ENCODE measurements at regions of chr7 and their contacts with region 1.

Region 1: DNA sequence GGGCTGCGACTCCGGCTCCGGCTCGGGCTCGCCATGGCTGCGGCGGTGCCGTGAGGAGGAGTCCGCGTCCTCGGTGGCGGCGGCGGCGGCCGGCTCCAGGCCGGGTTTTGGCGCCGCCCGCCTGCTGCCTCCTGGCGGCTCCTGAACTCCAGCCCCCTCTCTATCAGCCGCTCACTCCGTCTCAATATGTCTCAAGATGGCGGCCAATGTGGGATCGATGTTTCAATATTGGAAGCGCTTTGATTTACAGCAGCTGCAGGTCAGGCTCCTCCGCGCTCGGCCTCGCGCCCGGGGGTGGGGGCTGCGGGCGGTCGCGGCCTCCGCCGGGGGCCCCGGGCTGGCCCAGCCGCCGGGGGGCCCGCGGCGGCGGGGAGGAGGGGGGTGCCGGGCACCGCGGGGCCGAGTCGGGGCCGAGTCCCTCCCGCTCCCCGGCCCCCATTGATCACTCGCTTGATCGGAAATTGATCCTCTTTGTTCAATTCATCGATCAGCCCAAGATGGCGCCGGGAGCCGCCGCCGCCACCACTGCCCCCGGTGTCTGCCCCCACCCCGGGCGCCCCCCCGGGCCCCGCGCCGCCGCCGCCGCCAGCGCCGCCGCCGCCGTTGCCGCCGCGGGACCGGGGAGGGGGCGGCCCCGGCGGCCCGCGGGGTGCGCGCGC is 1.5 kb upstream of the CUX1 start:
- DNase-seq: peak; percentile 85 to 86
- H3K4me3 ChIP-seq: peak overlapping the region; percentile 99
- H3K4me3 Mint-ChIP-seq: peak overlapping the region; percentile 96
- H3K27ac Mint-ChIP-seq: no peak overlapping the region
- H3K4me1 ChIP-seq: peaks cover 32% of the 10 kb centered on the region
- H3K4me1 Mint-ChIP-seq: peaks cover 25% of the 10 kb centered on the region
- H3K27me3 ChIP-seq: no peaks in the 10 kb centered on the region
- H3K27me3 Mint-ChIP-seq: no peaks in the 10 kb centered on the region
- CTCF ChIP-seq: peak in 1 of 2 experiments; percentile 23

Region 2: GRCh38 chr7:101402088-101402779 is 413.7 kb before region 1 on chr7:
- CTCF ChIA-PET with region 1: no interaction called
- POLR2A ChIA-PET with region 1: no interaction called
- intact Hi-C with region 1: no loop called
- DNase-seq: peak; percentile 57 to 73
- H3K4me3 ChIP-seq: no peak overlapping the region
- H3K4me3 Mint-ChIP-seq: peak overlapping the region; percentile 20
- H3K27ac Mint-ChIP-seq: peak overlapping the region; percentile 37
- H3K4me1 ChIP-seq: peaks cover 13% of the 10 kb centered on the region
- H3K4me1 Mint-ChIP-seq: peaks cover 21% of the 10 kb centered on the region
- H3K27me3 ChIP-seq: no peaks in the 10 kb centered on the region
- H3K27me3 Mint-ChIP-seq: no peaks in the 10 kb centered on the region
- CTCF ChIP-seq: no peak

Region 3: GRCh38 chr7:101602484-101603241 is 213.3 kb before region 1 on chr7:
- CTCF ChIA-PET with region 1: interaction called, 5 read pairs
- POLR2A ChIA-PET with region 1: no interaction called
- intact Hi-C with region 1: loop called (anchors 1 kb)
- DNase-seq: peak; percentile 85 to 90
- H3K4me3 ChIP-seq: no peak overlapping the region
- H3K4me3 Mint-ChIP-seq: no peak overlapping the region
- H3K27ac Mint-ChIP-seq: peak overlapping the region; percentile 86
- H3K4me1 ChIP-seq: peaks cover 35% of the 10 kb centered on the region
- H3K4me1 Mint-ChIP-seq: peaks cover 12% of the 10 kb centered on the region
- H3K27me3 ChIP-seq: no peaks in the 10 kb centered on the region
- H3K27me3 Mint-ChIP-seq: no peaks in the 10 kb centered on the region
- CTCF ChIP-seq: peak; percentile 86 to 94

Region 4: DNA sequence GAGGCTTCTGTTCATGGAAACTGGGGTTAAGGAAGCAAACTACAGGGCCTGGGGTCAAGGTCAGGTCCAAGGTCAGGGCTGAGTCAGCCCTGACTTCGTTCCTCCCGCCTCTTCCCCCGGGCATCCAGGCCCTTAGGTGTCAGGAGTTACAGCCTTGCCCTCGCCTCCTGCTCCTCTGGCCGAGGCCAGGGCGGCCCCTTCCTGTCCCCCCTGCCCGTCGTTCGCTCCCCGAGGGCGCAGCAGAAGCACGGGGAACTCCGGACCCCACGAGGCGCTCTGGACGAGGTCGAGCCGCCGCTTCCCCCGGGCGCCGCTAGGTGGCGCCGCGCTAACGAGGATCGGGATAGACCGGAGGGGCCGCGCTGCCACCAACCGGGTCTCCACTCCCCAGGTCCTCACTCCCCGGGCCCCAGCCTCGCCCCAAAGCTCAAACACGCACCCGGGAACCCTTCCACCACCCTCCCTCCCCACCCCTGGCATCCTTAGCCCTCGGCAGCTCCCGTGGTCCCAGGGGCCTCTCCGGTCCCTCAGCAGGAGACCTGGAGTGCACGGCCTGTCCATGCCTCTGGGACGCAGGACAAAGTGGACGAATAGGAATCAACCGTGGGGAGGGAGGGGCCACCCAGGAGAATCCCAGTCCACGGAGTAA is 127.7 kb before region 1 on chr7:
- CTCF ChIA-PET with region 1: no interaction called
- POLR2A ChIA-PET with region 1: interaction called, 3 read pairs
- intact Hi-C with region 1: loop called (anchors 1 kb)
- DNase-seq: peak; percentile 80 to 91
- H3K4me3 ChIP-seq: peak overlapping the region; percentile 42
- H3K4me3 Mint-ChIP-seq: no peak overlapping the region
- H3K27ac Mint-ChIP-seq: no peak overlapping the region
- H3K4me1 ChIP-seq: peaks cover 19% of the 10 kb centered on the region
- H3K4me1 Mint-ChIP-seq: peaks cover 13% of the 10 kb centered on the region
- H3K27me3 ChIP-seq: no peaks in the 10 kb centered on the region
- H3K27me3 Mint-ChIP-seq: no peaks in the 10 kb centered on the region
- CTCF ChIP-seq: peak; percentile 93 to 94

Region 5: GRCh38 chr7:101743241-101743994 is 72.5 kb before region 1 on chr7:
- CTCF ChIA-PET with region 1: interaction called, 3 read pairs
- POLR2A ChIA-PET with region 1: interaction called, 3 read pairs
- intact Hi-C with region 1: loop called (anchors 2 kb)
- DNase-seq: peak; percentile 66 to 73
- H3K4me3 ChIP-seq: peak overlapping the region; percentile 61
- H3K4me3 Mint-ChIP-seq: peak overlapping the region; percentile 81
- H3K27ac Mint-ChIP-seq: peak overlapping the region; percentile 21
- H3K4me1 ChIP-seq: peaks cover 20% of the 10 kb centered on the region
- H3K4me1 Mint-ChIP-seq: peaks cover 11% of the 10 kb centered on the region
- H3K27me3 ChIP-seq: no peaks in the 10 kb centered on the region
- H3K27me3 Mint-ChIP-seq: no peaks in the 10 kb centered on the region
- CTCF ChIP-seq: peak; percentile 30 to 52

Region 6: DNA sequence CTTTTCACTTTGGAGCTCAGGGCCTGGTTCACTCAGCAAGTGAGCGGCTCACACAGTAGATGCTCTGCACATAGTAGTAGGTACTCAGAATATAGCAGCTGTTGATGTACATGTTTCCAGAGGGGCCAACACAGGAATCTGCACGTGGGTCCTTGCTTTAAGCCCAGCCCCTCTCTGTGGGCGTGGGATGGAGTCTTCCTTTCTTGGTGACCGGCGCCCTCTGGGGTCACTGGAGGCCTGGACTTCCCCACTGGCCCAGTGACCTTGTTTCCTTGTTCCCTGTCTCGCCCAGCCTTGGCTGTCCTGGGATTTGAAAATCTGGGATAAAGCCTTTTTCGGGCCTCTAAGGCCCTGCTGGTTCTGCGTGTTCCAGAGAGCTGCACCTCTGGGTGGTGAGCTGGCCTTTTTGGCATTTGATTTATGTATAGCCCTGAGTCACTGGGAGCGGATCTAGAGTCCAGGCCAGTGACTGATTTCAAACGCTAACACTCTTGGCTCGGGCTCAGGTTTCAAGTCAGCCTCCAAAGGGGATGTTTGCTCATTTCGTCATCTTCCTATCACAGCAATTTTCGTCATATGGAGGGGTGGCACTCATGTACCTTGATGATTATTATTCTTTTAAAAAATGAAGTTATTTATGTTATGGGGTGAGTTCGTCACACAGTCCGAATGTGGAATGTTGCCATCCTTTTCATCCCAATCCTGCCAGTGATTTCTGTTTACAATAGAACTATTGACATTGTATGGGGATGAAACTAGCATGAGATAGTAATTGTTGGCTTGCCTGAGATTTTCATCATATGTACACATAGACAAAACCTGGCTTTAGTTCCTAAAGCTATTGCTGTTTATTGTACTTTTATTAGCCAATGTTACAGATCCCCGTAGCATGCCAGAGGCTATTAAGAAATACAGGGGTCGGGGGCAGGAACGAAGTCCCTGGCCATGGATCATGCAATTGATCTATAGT is 66.9 kb after region 1 on chr7:
- CTCF ChIA-PET with region 1: no interaction called
- POLR2A ChIA-PET with region 1: no interaction called
- intact Hi-C with region 1: loop called (anchors 2 kb)
- DNase-seq: peak; percentile 92
- H3K4me3 ChIP-seq: peak overlapping the region; percentile 13; the same call in 1 of the 2 replicates
- H3K4me3 Mint-ChIP-seq: peak overlapping the region; percentile 66
- H3K27ac Mint-ChIP-seq: peak overlapping the region; percentile 96
- H3K4me1 ChIP-seq: peaks cover 63% of the 10 kb centered on the region
- H3K4me1 Mint-ChIP-seq: peaks cover 62% of the 10 kb centered on the region
- H3K27me3 ChIP-seq: no peaks in the 10 kb centered on the region
- H3K27me3 Mint-ChIP-seq: no peaks in the 10 kb centered on the region
- CTCF ChIP-seq: peak in 1 of 2 experiments; percentile 21

Region 7: DNA sequence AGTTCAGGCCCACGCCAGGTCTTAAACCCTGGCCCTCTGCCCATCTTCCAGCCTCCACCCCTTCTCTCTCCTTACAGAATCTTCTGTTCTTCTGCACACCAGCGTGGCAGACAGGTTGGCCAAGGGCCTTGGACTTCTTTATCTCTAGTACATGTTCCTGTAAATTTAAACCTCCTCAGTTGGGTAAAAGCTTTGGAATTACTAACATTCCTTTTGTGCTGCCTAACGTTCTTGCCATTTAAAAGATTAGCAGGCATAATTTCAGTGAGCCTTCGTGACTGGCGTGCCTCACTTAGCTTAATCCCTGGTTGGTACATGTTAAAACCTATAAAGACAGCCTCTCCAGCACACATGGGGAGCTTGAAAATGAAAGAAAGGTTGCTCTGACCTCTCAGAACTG is 193.7 kb after region 1 on chr7:
- CTCF ChIA-PET with region 1: no interaction called
- POLR2A ChIA-PET with region 1: interaction called, 5 read pairs
- intact Hi-C with region 1: loop called (anchors 5 kb)
- DNase-seq: peak; percentile 29 to 44
- H3K4me3 ChIP-seq: no peak overlapping the region
- H3K4me3 Mint-ChIP-seq: peak overlapping the region; percentile 24
- H3K27ac Mint-ChIP-seq: peak overlapping the region; percentile 86
- H3K4me1 ChIP-seq: peaks cover 87% of the 10 kb centered on the region
- H3K4me1 Mint-ChIP-seq: peaks cover 67% of the 10 kb centered on the region
- H3K27me3 ChIP-seq: no peaks in the 10 kb centered on the region
- H3K27me3 Mint-ChIP-seq: no peaks in the 10 kb centered on the region
- CTCF ChIP-seq: no peak

Region 8: DNA sequence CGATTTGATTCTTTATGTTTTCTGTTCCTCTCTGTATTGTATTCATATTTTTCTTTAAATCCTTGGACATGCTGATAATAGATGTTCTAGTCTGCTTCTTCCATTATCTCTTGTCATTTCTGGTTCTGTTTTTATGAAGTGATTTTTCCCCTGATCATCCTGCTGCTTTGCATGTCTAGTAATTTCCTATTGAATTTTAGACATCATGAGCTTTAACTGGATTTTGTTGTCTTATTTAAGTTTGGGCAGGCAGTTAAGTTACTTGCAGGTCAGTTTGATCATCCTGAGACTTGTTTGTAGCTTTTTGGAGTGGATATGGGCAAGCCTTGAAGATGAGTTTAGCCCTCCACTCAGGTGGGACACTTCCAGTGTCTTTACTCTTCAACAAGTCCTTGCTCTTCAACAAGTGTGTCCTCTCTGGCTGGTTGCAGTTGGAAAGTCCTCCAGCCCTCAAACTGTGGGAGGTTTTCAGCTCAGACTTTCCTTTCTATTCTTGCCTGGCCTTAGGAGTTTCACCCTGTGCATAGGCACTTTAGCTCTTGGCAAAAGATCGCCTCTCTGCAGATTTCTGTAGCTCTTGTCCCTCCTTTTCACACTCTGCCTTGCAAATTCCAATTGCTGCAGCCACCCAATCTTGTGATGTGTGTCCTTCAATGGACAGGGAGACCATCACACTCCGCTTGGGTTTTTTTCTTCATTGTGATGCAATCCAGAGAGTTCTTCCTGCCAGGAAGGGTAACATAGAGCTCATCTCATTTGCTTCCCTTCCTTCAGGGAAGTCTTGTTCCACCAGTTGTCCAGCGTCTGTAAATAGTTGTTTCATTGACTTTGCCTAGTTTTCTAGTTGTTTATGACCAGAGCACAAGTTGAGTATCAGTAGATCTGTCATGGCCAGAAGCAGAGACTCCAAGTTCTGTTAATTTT is 273.5 kb after region 1 on chr7:
- CTCF ChIA-PET with region 1: no interaction called
- POLR2A ChIA-PET with region 1: no interaction called
- intact Hi-C with region 1: no loop called
- DNase-seq: peak; percentile 18 to 20
- H3K4me3 ChIP-seq: no peak overlapping the region
- H3K4me3 Mint-ChIP-seq: no peak overlapping the region
- H3K27ac Mint-ChIP-seq: peak overlapping the region; percentile 51
- H3K4me1 ChIP-seq: peaks cover 30% of the 10 kb centered on the region
- H3K4me1 Mint-ChIP-seq: peaks cover 45% of the 10 kb centered on the region
- H3K27me3 ChIP-seq: no peaks in the 10 kb centered on the region
- H3K27me3 Mint-ChIP-seq: no peaks in the 10 kb centered on the region
- CTCF ChIP-seq: no peak

Region 9: DNA sequence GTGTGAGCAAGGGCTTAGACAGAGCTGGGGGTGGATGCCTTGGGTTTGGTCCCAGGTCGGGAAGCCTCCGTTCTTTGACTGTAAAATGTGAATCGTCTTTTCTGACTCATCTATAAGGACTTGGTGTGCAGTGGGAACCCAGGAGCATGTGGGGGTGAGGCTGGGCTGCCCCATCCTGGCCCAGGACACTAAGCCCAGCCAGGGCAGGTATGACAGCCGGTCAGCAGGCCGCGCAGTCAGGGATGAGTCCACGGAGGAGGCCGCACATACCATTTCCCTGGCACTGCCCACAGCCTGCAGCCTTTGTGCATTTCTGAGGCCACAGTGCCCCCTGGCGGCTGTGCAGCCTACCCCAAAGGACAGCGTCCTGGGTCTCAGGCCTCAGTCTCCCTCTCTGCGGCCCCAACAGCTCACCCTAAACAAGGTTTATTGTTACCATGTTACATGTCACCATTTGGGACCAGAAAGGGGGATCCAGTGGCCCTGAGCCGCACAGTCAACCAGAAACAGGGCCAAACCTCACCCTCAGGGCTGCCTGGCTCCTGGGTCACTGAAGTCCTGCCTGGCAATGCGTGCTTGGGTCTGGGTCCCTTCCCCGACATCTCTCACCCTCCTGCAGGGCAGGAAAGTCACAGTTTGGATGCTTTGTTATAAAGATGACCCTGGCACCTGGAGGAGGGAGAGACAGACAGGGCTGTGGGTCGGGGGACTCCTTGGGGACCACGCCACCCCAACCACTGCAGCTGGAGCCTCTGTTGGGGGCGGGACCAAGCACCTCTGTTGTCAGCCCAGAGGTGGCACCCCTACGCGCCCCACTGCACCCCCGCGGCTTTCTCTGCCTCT is 456.3 kb after region 1 on chr7:
- CTCF ChIA-PET with region 1: no interaction called
- POLR2A ChIA-PET with region 1: no interaction called
- intact Hi-C with region 1: loop called (anchors 5 kb)
- DNase-seq: peak; percentile 70 to 83
- H3K4me3 ChIP-seq: no peak overlapping the region
- H3K4me3 Mint-ChIP-seq: no peak overlapping the region
- H3K27ac Mint-ChIP-seq: peak overlapping the region; percentile 42
- H3K4me1 ChIP-seq: peaks cover 10% of the 10 kb centered on the region
- H3K4me1 Mint-ChIP-seq: peaks cover 5% of the 10 kb centered on the region
- H3K27me3 ChIP-seq: no peaks in the 10 kb centered on the region
- H3K27me3 Mint-ChIP-seq: no peaks in the 10 kb centered on the region
- CTCF ChIP-seq: peak; percentile 78 to 96

Measured in Caco-2 (cell line).